ENCODE measurements at regions of chr12 and their contacts with region 1.

Region 1: DNA sequence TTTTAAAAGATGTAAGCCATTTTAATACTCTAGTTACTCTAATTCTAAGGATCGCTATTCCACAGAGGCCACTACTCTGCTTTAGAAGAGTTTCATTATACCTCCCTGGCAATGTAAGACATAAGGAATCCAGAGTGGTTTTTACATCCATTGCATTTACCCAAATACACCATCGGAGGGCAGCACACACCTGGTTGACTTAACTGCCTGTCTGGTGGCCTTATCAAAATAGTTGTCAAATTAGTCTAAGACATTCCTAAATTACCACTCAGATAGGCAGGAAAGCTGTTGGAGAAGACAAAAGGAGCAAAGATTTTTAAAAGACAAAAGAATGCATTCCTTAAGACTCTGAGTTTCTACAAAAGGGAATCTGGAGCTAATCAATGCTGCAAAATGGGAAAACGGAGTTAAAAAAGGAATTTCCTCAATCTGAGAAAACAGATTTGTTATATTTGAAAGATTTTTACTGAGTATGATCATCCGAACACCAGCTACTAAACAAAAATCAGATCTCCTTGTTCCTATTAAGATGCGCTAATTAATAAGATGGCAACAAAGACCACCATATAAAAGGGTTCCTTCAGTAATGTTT is 33.8 kb upstream of the FGD4 start:
- DNase-seq: no peak
- ATAC-seq: peak; percentile 69
- H3K4me3 ChIP-seq: no peak overlapping the region
- H3K27ac ChIP-seq: no peak overlapping the region
- H3K4me1 ChIP-seq: no peaks in the 10 kb centered on the region
- H3K27me3 ChIP-seq: no peaks in the 10 kb centered on the region

Region 2: GRCh38 chr12:32322354-32322753 is 43.2 kb before region 1 on chr12:
- intact Hi-C with region 1: loop called in 1 of 2 experiments (anchors 2 kb)
- DNase-seq: no peak
- ATAC-seq: no peak
- H3K4me3 ChIP-seq: no peak overlapping the region
- H3K27ac ChIP-seq: no peak overlapping the region
- H3K4me1 ChIP-seq: no peaks in the 10 kb centered on the region
- H3K27me3 ChIP-seq: no peaks in the 10 kb centered on the region

Region 3: DNA sequence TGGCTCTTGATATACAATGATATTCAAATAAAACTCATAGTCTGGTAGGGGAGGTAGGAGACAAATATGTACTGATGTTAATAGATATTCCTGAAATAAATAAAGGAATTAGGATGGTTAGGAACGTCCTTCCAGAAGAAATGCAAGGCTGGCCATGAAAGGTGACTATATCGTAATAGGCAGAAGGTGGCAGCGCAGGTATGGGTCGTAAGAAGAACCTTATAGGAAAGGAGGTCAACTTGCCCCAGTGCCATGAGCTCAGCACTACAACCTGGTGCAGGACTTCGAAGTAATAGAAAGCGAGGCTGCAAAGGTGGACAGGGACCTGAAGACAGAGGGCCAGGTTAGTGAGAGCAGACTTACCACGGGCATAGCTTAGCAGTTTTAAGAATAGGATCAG is 21.5 kb before region 1 on chr12:
- intact Hi-C with region 1: no loop called
- DNase-seq: no peak
- ATAC-seq: no peak
- H3K4me3 ChIP-seq: no peak overlapping the region
- H3K27ac ChIP-seq: no peak overlapping the region
- H3K4me1 ChIP-seq: no peaks in the 10 kb centered on the region
- H3K27me3 ChIP-seq: no peaks in the 10 kb centered on the region

Region 4: DNA sequence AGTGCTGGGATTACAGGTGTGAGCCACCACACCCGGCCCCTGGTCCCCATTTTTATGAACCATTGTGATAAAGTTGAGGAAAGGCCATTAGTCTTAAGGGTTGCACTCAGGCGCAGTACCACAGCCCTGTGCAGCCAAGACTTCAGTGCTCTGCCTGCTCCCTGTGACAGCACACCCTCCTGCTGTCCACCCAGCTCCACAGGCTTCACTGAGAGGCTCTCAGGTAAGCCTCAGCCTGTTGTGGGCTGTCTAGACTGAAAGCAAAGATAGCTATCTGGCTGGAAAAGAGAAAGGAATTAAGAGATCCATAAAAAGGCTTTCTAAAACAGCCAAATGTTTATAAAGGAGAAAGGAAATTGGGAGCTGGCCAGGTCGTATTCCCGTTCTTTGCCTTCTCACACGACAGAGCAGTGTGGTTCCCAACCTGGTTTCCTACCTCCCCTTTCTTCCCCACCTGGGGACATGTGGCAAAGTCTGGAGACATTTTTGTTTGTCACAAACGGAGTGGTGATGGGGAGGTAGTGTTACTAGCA is 294.4 kb after region 1 on chr12:
- intact Hi-C with region 1: loop called in 1 of 2 experiments (anchors 5 kb)
- DNase-seq: no peak
- ATAC-seq: no peak
- H3K4me3 ChIP-seq: no peak overlapping the region
- H3K27ac ChIP-seq: no peak overlapping the region
- H3K4me1 ChIP-seq: peaks cover 0 to 4% of the 10 kb centered on the region in 2 donors
- H3K27me3 ChIP-seq: no peaks in the 10 kb centered on the region

Region 5: GRCh38 chr12:32679091-32679919 is 313.7 kb after region 1 on chr12 and contains the start of gene DNM1L:
- intact Hi-C with region 1: loop called in 1 of 2 experiments (anchors 10 kb)
- DNase-seq: peak; percentile 97
- ATAC-seq: peak; percentile 99
- H3K4me3 ChIP-seq: peak within 1 kb of the TSS; percentile 65 to 80
- H3K27ac ChIP-seq: peak within 1 kb of the TSS; percentile 62 to 88
- H3K4me1 ChIP-seq: no peaks in the 10 kb centered on the region
- H3K27me3 ChIP-seq: no peaks in the 10 kb centered on the region
- total RNA-seq, gene DNM1L: 68.8 to 92.5 TPM